Activated CD4-positive, alpha-beta T cell treated with anti-CD3 and anti-CD28 coated beads, Interleukin-2, amount 10 ng/mL, durations not matched to agents 24 days and 14 days (primary cell): ENCODE measurements at regions of chr9 and their contacts with region 1.

Region 1: GRCh38 chr9:68802525-68803015 is 97.5 kb downstream of the PIP5K1B start:
- DNase-seq: peak; percentile 74
- H3K4me3 Mint-ChIP-seq: no peak overlapping the region
- H3K27ac Mint-ChIP-seq: no peak overlapping the region
- H3K4me1 Mint-ChIP-seq: peaks cover 11% of the 10 kb centered on the region
- H3K27me3 Mint-ChIP-seq: no peaks in the 10 kb centered on the region

Region 2: DNA sequence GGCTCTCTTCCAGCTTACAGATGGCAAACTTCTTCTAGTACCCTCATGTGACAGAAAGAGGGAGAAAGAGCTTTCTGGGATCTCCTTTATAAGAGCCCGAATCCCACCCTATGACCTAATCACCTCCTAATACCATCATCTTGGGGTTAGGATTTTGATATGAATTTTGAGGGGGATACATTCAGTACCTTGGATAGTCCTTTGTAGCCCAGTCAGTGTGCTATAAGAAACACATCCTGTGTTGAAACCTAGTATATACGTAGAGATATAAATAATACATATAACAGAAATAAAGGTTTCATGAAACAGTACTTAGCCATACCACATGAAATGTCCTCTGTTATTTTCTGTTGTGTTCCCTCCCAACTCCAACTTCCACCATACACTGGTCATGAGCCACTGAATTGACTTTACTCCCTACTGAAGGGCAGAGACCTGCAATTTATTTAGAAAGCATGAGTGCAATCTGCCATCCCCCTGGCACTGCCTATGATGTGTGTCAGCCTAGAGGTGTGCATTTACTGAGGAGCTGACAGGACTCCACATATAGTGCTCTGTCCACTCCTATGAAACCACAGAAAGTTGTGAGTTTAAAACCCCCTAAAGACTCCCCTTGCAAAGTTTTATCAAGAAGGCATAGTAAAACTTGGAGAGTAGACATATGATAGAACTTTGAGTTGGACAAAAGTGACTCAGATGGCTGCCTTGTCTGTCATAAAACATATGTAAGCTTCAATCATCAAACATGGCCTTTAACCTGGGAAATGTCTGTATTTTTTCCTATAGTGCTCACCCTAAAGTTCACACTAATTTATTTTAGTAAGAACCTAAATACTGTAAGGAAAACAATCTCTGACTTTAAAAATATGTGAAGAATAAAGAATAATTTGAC is 84.8 kb before region 1 on chr9:
- intact Hi-C with region 1: no loop called
- DNase-seq: no peak
- H3K4me3 Mint-ChIP-seq: no peak overlapping the region
- H3K27ac Mint-ChIP-seq: no peak overlapping the region
- H3K4me1 Mint-ChIP-seq: peaks cover 9% of the 10 kb centered on the region
- H3K27me3 Mint-ChIP-seq: peaks cover 6% of the 10 kb centered on the region

Region 3: DNA sequence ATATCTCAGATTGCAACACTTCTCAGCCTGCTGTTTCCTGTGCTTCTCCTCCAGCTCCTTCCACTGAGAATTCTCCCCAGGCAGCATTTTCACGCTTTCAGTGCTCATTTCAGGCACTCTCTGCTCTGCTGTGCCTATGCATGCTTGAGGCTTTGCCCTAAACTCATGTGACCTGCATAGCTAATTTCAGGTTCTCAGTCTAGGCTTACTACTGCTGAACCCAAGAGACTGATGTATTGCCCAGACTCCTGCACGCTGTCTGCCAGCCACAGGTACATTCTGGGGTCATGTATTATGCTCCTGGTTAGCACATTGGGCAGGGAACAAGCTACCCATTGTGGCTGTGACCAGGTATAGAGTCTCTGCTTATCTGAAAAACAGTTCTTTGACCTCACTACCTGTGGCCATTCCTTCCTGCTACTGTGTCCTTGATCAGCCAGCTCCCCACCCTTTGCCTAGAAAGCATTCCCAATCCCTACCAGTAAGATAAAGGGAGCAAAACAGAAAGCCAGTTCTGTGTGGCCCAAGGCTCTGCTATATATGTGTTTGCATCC is 62.9 kb before region 1 on chr9:
- intact Hi-C with region 1: no loop called
- DNase-seq: no peak
- H3K4me3 Mint-ChIP-seq: no peak overlapping the region
- H3K27ac Mint-ChIP-seq: no peak overlapping the region
- H3K4me1 Mint-ChIP-seq: peaks cover 2% of the 10 kb centered on the region
- H3K27me3 Mint-ChIP-seq: peaks cover 9% of the 10 kb centered on the region

Region 4: GRCh38 chr9:68779558-68780384 is 22.8 kb before region 1 on chr9:
- intact Hi-C with region 1: loop called (anchors 1 kb)
- DNase-seq: peak; percentile 98
- H3K4me3 Mint-ChIP-seq: no peak overlapping the region
- H3K27ac Mint-ChIP-seq: no peak overlapping the region
- H3K4me1 Mint-ChIP-seq: peaks cover 10% of the 10 kb centered on the region
- H3K27me3 Mint-ChIP-seq: peaks cover 4% of the 10 kb centered on the region

Region 5: GRCh38 chr9:68895741-68896478 is 93.3 kb after region 1 on chr9:
- intact Hi-C with region 1: loop called (anchors 5 kb)
- DNase-seq: peak; percentile 75
- H3K4me3 Mint-ChIP-seq: peak overlapping the region; percentile 73
- H3K27ac Mint-ChIP-seq: peak overlapping the region; percentile 82
- H3K4me1 Mint-ChIP-seq: peaks cover 46% of the 10 kb centered on the region
- H3K27me3 Mint-ChIP-seq: no peaks in the 10 kb centered on the region

Region 6: DNA sequence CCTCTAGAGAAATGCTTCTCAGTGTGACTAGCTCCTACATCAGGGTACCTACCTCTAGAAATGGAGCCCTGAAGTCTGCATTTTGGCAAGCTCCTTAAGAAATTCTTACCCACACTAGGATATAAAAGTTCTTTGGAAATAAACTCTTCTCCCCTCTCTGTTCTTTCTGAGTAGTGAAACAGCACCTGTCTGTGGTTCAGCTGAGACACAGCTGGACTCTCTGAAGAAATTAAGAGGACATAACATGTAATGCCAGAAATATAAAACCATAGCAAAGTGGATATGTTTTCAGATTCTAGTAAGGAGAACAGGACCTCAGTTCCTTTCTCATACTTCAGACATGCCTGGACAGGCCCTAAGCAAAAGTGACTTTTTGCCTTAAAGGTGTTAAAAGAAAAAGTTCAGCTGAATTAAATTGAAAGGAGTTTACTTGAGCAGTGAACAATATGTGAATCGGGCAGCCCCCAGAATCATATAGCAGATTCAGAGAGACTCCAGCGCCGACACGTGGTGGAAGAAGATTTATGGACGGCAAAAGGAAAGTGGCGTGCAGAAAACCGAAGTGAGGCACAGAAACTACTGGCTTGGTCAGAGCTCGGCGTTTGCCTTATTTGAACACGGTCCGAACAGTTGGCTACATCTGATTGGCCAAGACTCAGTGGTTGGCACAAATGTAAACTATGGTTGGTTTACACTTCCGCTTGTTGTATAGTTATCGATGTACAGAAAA is 146.9 kb after region 1 on chr9:
- intact Hi-C with region 1: loop called (anchors 1 kb)
- DNase-seq: peak; percentile 79
- H3K4me3 Mint-ChIP-seq: peak overlapping the region; percentile 28
- H3K27ac Mint-ChIP-seq: peak overlapping the region; percentile 81
- H3K4me1 Mint-ChIP-seq: peaks cover 59% of the 10 kb centered on the region
- H3K27me3 Mint-ChIP-seq: no peaks in the 10 kb centered on the region

Region 7: GRCh38 chr9:69027355-69028096 is 225.0 kb after region 1 on chr9:
- intact Hi-C with region 1: loop called (anchors 10 kb)
- DNase-seq: peak; percentile 84
- H3K4me3 Mint-ChIP-seq: no peak overlapping the region
- H3K27ac Mint-ChIP-seq: no peak overlapping the region
- H3K4me1 Mint-ChIP-seq: peaks cover 44% of the 10 kb centered on the region
- H3K27me3 Mint-ChIP-seq: peaks cover 2% of the 10 kb centered on the region